ENCODE measurements at regions of chrX and their contacts with region 1.

Region 1: GRCh38 chrX:138745196-138745595 is 33.7 kb upstream of the FGF13 start:
- DNase-seq: peak in 2 of 4 donors; percentile 63 to 70
- ATAC-seq: peak; percentile 89
- H3K4me3 ChIP-seq: no peak overlapping the region
- H3K27ac ChIP-seq: no peak overlapping the region
- H3K4me1 ChIP-seq: no peaks in the 10 kb centered on the region
- H3K27me3 ChIP-seq: no peaks in the 10 kb centered on the region
- CTCF ChIP-seq: peak; percentile 64 to 74

Region 2: DNA sequence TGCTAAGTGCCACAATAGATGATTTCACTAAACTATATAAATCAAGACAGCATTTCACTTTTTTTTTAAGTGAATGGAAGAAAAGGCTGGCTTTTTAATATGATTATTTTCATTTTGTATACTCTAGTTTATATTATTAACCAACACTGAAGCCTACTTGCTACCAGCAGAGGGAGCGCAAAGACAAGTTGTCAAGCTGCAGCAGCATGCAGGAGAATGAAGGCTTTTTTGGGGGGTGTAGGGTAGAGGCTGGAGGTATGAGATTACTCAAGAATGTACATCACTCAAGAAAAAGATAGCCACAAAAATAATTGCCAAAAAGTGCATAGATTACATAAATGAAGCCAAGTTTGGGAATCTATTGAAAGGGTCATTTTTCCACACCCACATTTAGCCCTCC is 553.2 kb before region 1 on chrX:
- intact Hi-C with region 1: loop called in 1 of 2 experiments (anchors 10 kb)
- DNase-seq: peak in 2 of 4 donors; percentile 2 to 28
- ATAC-seq: no peak
- H3K4me3 ChIP-seq: no peak overlapping the region
- H3K27ac ChIP-seq: no peak overlapping the region
- H3K4me1 ChIP-seq: no peaks in the 10 kb centered on the region
- H3K27me3 ChIP-seq: no peaks in the 10 kb centered on the region
- CTCF ChIP-seq: peak in 1 of 2 donors; percentile 36